ENCODE measurements at regions of chr1 and their contacts with region 1.

Region 1: GRCh38 chr1:42700006-42700405 is 17.8 kb downstream of the YBX1 start:
- DNase-seq: no peak
- ATAC-seq: no peak
- H3K4me3 Mint-ChIP-seq: no peak overlapping the region
- H3K27ac Mint-ChIP-seq: peak overlapping the region; percentile 73
- H3K4me1 Mint-ChIP-seq: peaks cover 11% of the 10 kb centered on the region
- H3K27me3 Mint-ChIP-seq: no peaks in the 10 kb centered on the region

Region 2: DNA sequence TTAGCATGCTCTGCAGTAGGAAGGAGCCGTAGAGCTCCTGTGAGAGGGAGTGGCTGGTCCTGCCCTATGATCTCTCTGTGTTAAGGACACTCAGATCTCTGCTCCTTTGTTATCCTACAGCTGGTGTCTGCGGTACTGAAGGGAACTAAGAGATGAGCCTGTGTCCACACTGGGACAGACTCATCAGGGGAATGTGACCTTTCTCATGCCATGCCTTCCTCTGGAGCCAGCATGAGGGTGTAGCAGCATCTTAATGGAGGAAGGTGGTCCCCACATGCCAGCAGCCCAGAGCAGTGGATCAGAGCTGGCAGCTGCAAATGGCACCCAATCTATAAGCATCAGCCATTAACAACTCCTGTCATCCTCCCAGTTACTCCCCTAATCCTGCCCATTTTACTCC is 571.5 kb before region 1 on chr1:
- CTCF ChIA-PET with region 1: no interaction called
- POLR2A ChIA-PET with region 1: no interaction called
- intact Hi-C with region 1: no loop called
- DNase-seq: no peak
- ATAC-seq: no peak
- H3K4me3 Mint-ChIP-seq: no peak overlapping the region
- H3K27ac Mint-ChIP-seq: no peak overlapping the region
- H3K4me1 Mint-ChIP-seq: no peaks in the 10 kb centered on the region
- H3K27me3 Mint-ChIP-seq: peaks cover 6% of the 10 kb centered on the region

Region 3: DNA sequence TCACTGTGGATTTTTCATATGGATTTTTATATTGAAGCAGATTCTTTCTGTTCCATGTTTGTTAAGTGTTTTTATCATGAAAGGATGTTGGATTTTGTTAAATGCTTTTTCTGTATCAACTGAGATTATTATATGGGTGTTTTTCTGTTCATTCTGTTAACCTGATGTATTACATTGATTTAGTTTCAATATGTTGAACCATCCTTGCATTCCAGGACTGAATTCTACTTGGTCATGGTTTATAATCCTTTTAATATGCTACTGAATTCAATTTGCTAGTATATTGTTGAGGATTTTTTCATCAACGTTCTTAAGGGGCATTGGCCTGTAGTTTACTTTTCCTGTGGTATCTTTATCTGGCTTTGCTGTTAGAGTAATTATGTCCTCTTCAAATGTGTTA is 181.1 kb before region 1 on chr1:
- CTCF ChIA-PET with region 1: no interaction called
- POLR2A ChIA-PET with region 1: no interaction called
- intact Hi-C with region 1: no loop called
- DNase-seq: no peak
- ATAC-seq: no peak
- H3K4me3 Mint-ChIP-seq: no peak overlapping the region
- H3K27ac Mint-ChIP-seq: no peak overlapping the region
- H3K4me1 Mint-ChIP-seq: no peaks in the 10 kb centered on the region
- H3K27me3 Mint-ChIP-seq: no peaks in the 10 kb centered on the region

Region 4: DNA sequence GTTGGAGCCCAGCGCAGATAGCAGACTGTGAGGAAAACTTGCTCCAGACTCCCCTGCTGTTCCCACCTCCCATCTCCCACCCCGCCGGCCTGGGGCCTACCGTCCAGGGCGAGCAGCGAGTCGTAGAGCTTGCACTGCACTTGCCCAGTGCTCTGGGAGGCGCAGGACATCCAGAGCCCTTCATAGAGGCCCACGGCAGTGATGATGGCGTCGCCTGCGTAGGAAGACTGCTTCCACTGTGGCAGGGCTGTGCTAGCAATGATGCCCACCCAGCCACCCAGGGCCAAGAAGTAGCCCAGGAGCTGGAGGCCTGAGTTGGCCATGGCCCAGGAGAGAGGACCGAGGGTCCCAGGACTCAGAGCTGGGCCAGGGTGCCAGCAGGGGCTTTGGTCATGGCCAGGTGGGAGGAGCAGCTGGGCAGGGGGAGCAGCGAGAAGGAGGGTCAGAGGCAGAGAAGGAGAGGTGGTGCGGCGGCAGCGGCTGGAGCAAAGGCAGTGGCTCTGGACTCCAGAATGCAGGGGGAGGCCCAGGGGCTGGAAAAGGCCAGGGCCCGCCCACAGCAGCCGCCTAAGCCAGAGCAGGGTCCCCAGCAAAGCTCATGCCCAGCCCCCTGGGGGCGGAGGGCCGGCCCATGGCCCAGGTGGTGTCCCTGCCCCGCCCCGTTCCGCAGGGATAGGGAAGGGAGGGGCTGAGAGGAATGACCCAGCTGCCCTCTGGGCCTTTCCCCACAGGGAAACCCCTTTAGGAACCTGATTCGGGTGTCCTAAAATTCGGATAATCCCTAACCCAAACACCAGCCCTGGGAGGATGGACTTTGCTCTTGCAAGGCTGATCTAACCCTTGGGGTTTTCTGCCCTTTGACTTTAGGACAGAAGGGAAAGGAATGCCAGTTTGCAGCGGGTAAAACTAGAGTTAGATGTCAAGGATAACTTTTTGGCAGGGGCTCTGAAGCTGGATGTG is 40.0 kb after region 1 on chr1 and contains the start of gene CLDN19:
- CTCF ChIA-PET with region 1: no interaction called
- POLR2A ChIA-PET with region 1: no interaction called
- intact Hi-C with region 1: no loop called
- DNase-seq: no peak
- ATAC-seq: no peak
- H3K4me3 Mint-ChIP-seq: no peak within 1 kb of the TSS
- H3K27ac Mint-ChIP-seq: no peak within 1 kb of the TSS
- H3K4me1 Mint-ChIP-seq: peaks cover 7% of the 10 kb centered on the region
- H3K27me3 Mint-ChIP-seq: no peaks in the 10 kb centered on the region
- total RNA-seq, gene CLDN19: not detected

Region 5: DNA sequence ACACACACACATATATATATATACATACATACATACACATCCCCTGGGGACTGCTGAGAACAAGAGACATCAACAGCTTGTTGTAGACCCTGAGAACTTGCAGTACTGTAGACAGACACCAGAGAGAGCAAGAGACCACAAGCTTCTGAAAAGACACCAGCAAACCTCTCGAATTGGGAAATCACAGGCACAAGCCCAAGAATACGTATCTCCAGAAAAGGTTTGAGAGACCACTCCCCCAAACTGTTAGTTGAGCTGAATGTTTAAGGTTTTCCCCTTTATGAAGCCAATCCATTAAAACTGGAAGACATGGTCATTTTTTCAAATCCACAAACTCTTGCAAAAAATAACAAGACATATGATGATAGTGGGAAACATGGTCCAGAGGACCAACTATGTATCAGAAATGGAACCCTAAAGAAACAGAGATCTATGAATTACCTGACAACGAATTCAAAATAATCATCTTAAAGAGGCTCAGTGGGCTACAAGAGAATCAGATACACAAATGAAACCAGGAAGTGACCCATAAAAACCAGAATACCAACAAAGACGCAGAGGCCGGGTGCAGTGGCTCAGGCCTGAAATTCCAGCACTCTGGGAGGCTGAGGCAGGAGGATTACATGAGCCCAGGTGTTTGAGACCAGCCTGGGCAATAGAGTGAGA is 213.6 kb after region 1 on chr1:
- CTCF ChIA-PET with region 1: no interaction called
- POLR2A ChIA-PET with region 1: no interaction called
- intact Hi-C with region 1: no loop called
- DNase-seq: peak; percentile 82
- ATAC-seq: peak; percentile 90
- H3K4me3 Mint-ChIP-seq: no peak overlapping the region
- H3K27ac Mint-ChIP-seq: no peak overlapping the region
- H3K4me1 Mint-ChIP-seq: peaks cover 5% of the 10 kb centered on the region
- H3K27me3 Mint-ChIP-seq: peaks cover 9% of the 10 kb centered on the region

Region 6: GRCh38 chr1:43104027-43104763 is 404.2 kb after region 1 on chr1:
- CTCF ChIA-PET with region 1: no interaction called
- POLR2A ChIA-PET with region 1: interaction called, 13 read pairs
- intact Hi-C with region 1: no loop called
- DNase-seq: no peak
- ATAC-seq: no peak
- H3K4me3 Mint-ChIP-seq: no peak overlapping the region
- H3K27ac Mint-ChIP-seq: no peak overlapping the region
- H3K4me1 Mint-ChIP-seq: no peaks in the 10 kb centered on the region
- H3K27me3 Mint-ChIP-seq: peaks cover 3% of the 10 kb centered on the region

Measured in activated CD4-positive, alpha-beta T cell treated with anti-CD3 and anti-CD28 coated beads for 36 hours (primary cell).